Activated T-helper 2 cell treated with anti-CD3 and anti-CD28 coated beads, Interferon-gamma antibody, Interleukin-2, Interleukin-4, amounts not matched to agents 10 μg/mL and 5 μg/mL and 100 μg/mL, durations not matched to agents 14 hours and 24 hours and 36 hours (primary cell): ENCODE measurements at regions of chr2 and their contacts with region 1.

Region 1: DNA sequence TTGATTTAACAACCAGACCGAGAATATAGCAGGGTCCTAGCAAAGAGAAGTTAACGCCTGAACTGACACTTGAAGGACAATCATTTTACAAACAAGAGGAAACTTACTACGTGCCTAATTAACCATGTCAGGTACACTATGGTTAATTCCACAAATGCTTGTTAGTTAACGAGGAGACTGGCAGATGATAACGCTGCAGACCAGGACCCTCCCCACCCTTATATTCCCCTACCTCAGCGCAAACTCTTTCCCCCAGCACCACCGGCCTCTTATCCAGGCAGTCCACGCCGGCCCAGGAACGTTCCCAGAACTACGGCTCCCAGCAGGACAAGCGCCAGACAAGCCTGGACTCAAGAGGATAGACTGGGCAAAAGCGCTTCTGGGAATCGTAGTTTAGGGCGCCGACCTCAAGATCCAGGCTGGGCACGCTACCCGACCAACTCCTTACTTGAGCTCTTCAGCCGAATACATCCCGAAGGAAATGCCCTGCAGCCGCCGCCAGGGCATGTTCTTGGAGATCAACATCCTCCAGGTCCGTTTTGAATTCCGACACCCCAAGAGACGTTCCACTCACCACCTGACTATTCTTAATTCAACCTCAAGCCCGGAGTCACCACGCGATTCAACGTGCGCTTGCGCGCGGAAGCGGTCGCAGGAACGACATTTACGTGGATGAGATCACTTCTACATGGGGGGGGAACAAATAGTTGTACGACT is at the start of gene POLR1A:
- DNase-seq: peak; percentile 85
- H3K4me3 Mint-ChIP-seq: peak within 1 kb of the TSS; percentile 94
- H3K27ac Mint-ChIP-seq: peak within 1 kb of the TSS; percentile 99
- H3K4me1 Mint-ChIP-seq: peaks cover 39% of the 10 kb centered on the region
- H3K27me3 Mint-ChIP-seq: no peaks in the 10 kb centered on the region
- total RNA-seq, gene POLR1A: 54.5 and 61.8 TPM in 2 replicates

Region 2: DNA sequence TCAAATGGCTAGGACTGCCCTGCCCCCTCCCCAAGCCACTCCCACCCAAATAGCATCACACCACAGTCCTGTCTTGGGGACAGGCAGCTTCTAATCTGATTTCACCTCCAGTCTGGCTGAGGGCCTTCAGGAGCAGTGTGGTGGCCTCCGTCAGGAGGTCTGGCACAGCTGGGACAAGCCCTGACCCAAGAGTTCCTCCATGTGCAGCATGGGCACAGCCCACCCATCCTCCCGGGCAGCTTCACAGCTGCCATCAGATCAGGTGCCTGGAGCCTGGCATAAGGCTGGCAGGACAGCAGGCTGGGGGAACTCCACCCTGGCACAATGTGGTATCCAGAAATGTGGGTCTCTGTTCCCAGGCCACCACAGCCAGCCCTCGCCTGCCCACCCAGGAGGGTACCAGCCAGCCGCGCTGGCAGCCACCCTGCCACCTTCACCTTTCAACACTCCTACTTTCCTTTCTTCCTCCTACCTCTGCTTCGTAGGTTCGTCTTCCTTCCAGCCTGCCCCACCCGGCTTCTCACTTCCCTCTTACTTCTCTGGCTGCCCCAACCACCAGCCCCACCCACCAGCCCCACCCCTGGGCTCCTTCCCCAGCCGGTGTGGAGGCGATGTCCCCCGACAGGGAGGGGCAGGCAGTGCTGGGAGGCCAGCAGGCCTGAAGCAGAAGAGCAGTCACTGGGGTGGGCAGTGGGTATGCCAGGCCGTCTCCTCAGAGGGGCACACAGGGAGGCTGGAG is 695.4 kb before region 1 on chr2 and contains the start of gene CAPG:
- intact Hi-C with region 1: loop called (anchors 5 kb)
- DNase-seq: peak; percentile 56
- H3K4me3 Mint-ChIP-seq: peak within 1 kb of the TSS; percentile 88
- H3K27ac Mint-ChIP-seq: peak within 1 kb of the TSS; percentile 83
- H3K4me1 Mint-ChIP-seq: peaks cover 56% of the 10 kb centered on the region
- H3K27me3 Mint-ChIP-seq: no peaks in the 10 kb centered on the region
- total RNA-seq, gene CAPG: 145 and 146 TPM in 2 replicates

Region 3: DNA sequence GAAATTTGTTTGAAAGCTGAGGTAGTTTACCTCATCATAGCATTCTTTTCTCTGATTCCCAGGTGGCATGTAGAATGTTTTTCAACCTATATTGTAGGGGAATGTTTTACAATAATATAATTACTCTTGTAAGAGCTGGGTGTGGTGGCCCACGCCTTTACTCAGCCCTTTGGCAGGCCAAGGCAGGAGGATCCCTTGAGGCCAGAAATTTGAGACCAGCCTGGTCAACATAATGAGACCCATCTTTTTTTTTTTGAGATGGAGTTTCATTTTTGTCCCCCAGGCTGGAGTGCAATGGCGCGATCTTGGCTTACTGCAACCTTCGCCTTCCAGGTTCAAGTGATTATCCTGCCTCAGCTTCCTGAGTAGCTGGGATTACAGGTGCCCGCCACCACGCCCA is 485.8 kb before region 1 on chr2:
- intact Hi-C with region 1: loop called (anchors 5 kb)
- DNase-seq: no peak
- H3K4me3 Mint-ChIP-seq: no peak overlapping the region
- H3K27ac Mint-ChIP-seq: no peak overlapping the region
- H3K4me1 Mint-ChIP-seq: peaks cover 14% of the 10 kb centered on the region
- H3K27me3 Mint-ChIP-seq: no peaks in the 10 kb centered on the region

Region 4: DNA sequence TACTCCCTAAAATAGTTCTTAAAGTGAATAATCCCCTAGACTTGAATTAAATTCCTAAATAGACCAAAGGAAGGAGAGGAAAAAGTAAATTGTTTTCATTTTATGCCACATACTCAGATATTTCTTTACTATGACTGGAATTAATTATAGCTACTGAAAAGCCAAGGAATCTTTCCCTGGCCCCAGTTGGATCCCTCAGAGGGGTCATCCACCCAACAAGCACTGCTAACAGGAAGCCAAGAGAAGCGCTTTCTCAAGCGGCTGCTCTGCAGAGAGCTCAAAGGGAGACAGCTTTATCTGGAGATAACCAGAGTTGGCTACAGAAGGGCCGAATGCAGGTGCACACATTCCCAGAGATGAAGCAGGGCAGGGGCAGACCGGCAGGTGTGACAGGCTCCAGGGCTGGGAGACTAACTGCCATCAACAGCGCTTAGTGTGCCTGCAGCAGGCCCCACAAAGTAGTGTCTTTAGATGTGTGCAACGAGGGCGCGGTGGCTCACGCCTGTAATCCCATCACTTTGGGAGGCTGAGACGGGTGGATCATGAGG is 50.8 kb before region 1 on chr2:
- intact Hi-C with region 1: no loop called
- DNase-seq: no peak
- H3K4me3 Mint-ChIP-seq: no peak overlapping the region
- H3K27ac Mint-ChIP-seq: no peak overlapping the region
- H3K4me1 Mint-ChIP-seq: no peaks in the 10 kb centered on the region
- H3K27me3 Mint-ChIP-seq: no peaks in the 10 kb centered on the region

Region 5: GRCh38 chr2:86160156-86160952 is 54.9 kb after region 1 on chr2:
- intact Hi-C with region 1: no loop called
- DNase-seq: no peak
- H3K4me3 Mint-ChIP-seq: no peak overlapping the region
- H3K27ac Mint-ChIP-seq: no peak overlapping the region
- H3K4me1 Mint-ChIP-seq: peaks cover 2% of the 10 kb centered on the region
- H3K27me3 Mint-ChIP-seq: no peaks in the 10 kb centered on the region

Region 6: DNA sequence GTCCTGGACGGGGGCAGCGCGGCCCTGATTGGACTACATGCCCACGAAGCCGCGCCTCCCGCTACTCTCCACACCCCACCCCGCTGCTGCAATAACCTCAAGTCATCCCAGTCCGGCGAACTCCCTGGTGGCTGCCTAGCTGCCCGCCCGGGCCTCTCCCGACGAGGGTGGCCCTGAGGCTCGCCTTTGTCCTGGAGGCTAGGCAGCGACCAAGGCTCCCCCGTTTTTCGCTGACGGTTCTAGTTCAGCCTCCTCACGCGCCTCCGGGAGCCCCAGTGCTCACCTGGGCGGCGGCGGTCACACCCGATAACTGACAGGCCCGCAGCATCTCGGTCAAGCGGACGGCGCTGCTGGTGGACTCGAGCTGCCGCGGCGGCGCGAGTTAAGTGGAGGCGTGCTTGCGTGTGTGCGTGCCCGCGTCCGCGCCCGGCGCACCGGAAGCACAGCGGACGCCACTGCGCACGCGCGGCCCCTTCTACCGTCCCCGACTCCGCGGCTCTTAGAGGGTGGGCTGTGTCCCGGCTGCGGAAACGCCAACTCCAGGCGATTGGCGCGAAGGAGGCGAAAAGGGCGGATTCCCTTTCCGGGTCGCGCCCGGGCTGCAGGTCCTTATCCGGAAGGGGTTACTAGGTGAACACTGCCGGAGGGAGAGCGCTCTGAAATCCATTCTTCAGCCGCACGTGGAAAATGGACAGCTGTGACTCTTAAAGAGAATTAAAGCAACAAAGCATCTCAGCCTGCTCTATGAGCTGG is 89.8 kb after region 1 on chr2 and contains the start of gene IMMT:
- intact Hi-C with region 1: loop called (anchors 2 kb)
- DNase-seq: peak; percentile 91
- H3K4me3 Mint-ChIP-seq: peak within 1 kb of the TSS; percentile 96
- H3K27ac Mint-ChIP-seq: peak within 1 kb of the TSS; percentile 89
- H3K4me1 Mint-ChIP-seq: peaks cover 43% of the 10 kb centered on the region
- H3K27me3 Mint-ChIP-seq: no peaks in the 10 kb centered on the region
- total RNA-seq, gene IMMT: 160 and 180 TPM in 2 replicates